B cell (primary cell): ENCODE measurements at regions of chr5 and their contacts with region 1.

Region 1: GRCh38 chr5:154467655-154468354 is 10.2 kb downstream of the HAND1 start:
- DNase-seq: peak; percentile 79
- ATAC-seq: peak; percentile 86
- H3K4me3 ChIP-seq: no peak overlapping the region
- H3K4me3 Mint-ChIP-seq: no peak overlapping the region
- H3K27ac ChIP-seq: no peak overlapping the region
- H3K27ac Mint-ChIP-seq: no peak overlapping the region
- H3K4me1 ChIP-seq: peaks cover 0 to 10% of the 10 kb centered on the region in 2 donors
- H3K4me1 Mint-ChIP-seq: no peaks in the 10 kb centered on the region
- H3K27me3 ChIP-seq: peaks cover 0 to 44% (median 32%) of the 10 kb centered on the region in 4 experiments
- H3K27me3 Mint-ChIP-seq: peaks cover 39% of the 10 kb centered on the region
- CTCF ChIP-seq: peak; percentile 95

Region 2: DNA sequence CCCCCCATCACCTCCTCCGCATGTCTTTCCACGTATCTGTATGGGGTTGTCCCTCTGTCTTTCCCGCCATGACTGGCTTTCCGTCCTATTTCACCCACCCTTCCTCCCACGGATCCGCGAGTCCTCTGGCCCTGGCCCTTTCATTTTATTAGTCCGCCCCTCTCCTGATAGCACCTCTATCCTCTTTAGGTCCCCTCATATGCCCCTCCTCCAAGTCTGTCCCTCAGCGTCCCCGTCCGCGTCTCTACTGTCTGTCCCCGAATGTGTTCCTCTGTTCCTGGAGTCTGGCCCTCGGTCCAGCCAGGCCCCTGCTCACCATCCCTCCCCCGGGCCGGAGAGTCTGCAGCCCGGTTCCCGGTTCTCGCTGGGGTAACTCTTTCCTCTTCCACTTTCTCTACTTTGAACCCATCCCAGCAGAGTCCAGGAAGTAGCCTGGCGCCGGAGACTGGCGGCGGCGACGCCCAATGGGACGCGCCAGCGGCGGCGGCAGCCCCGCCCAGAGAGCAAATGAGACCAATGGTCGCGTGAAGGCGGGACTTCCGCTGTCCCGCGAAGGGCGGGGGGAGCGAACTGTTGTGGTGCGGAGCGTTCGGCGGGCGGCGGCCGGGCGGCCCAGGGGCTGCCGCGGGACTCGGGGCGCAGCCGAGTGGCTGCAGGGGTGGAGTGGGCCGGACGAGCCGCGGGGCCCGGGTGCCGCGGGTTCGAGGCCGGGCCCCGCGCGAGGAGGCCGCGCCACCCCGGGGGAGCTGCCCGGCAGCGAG is 22.2 kb before region 1 on chr5 and contains the start of gene SAP30L:
- CTCF ChIA-PET with region 1: interaction called, 12 read pairs
- POLR2A ChIA-PET with region 1: no interaction called
- intact Hi-C with region 1: no loop called
- DNase-seq: peak; percentile 97
- ATAC-seq: peak; percentile 96
- H3K4me3 ChIP-seq: peak within 1 kb of the TSS; percentile 78 to 99 (median 90)
- H3K4me3 Mint-ChIP-seq: peak within 1 kb of the TSS; percentile 98
- H3K27ac ChIP-seq: peak within 1 kb of the TSS; percentile 9 to 75
- H3K27ac Mint-ChIP-seq: peak within 1 kb of the TSS; percentile 93
- H3K4me1 ChIP-seq: peaks cover 24 to 32% of the 10 kb centered on the region in 2 donors
- H3K4me1 Mint-ChIP-seq: peaks cover 53% of the 10 kb centered on the region
- H3K27me3 ChIP-seq: no peaks in the 10 kb centered on the region
- H3K27me3 Mint-ChIP-seq: no peaks in the 10 kb centered on the region
- CTCF ChIP-seq: no peak
- total RNA-seq, gene SAP30L: 41.5 and 50.0 TPM in 2 replicates

Region 3: DNA sequence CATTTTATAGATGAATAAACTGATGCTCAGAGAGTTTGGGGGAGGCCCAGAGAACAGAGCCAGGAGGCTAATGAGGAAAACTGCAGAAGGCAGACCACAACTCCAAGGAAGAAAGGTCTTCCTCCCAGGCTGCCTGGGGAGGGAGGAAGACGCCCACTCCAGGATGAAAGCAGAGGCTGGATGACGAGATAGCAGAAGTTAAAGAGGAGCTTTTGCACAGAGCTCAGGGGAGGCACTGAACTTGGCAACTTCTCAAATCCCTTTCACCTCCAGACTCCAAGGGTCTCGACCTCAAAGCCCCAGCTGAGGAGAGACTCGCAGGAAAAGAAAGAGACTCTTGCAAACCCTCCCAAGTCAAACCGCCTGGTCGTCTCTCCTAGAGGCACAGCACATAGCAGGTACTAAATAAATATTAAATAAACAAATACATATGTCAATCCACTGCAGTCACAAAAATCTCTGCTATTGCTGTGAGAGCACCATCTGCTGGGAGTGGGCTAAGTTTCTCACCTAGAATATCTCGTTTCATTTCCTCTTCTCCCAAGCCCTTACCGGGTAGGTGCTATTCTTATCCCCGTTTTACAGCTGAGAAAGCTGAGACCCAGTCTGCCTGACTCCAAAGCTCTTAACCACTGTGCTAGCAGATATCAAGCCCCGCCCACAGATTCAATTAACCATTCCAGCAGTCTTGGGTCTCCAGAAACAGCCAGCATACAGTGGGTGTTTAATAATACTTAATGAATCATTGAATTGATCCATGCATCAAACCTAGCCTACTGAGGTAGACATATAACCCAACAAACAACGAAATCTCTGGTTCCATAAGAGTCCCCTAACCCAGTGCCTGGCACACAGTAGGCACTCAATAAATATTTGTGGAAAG is 108.0 kb after region 1 on chr5:
- CTCF ChIA-PET with region 1: interaction called, 3 read pairs
- POLR2A ChIA-PET with region 1: no interaction called
- intact Hi-C with region 1: loop called (anchors 1 kb)
- DNase-seq: peak; percentile 45
- ATAC-seq: peak; percentile 51
- H3K4me3 ChIP-seq: no peak overlapping the region
- H3K4me3 Mint-ChIP-seq: no peak overlapping the region
- H3K27ac ChIP-seq: no peak overlapping the region
- H3K27ac Mint-ChIP-seq: no peak overlapping the region
- H3K4me1 ChIP-seq: peaks cover 9 to 11% of the 10 kb centered on the region in 2 donors
- H3K4me1 Mint-ChIP-seq: peaks cover 8% of the 10 kb centered on the region
- H3K27me3 ChIP-seq: peaks cover 0 to 13% (median 0%) of the 10 kb centered on the region in 4 experiments
- H3K27me3 Mint-ChIP-seq: peaks cover 13% of the 10 kb centered on the region
- CTCF ChIP-seq: no peak

Region 4: DNA sequence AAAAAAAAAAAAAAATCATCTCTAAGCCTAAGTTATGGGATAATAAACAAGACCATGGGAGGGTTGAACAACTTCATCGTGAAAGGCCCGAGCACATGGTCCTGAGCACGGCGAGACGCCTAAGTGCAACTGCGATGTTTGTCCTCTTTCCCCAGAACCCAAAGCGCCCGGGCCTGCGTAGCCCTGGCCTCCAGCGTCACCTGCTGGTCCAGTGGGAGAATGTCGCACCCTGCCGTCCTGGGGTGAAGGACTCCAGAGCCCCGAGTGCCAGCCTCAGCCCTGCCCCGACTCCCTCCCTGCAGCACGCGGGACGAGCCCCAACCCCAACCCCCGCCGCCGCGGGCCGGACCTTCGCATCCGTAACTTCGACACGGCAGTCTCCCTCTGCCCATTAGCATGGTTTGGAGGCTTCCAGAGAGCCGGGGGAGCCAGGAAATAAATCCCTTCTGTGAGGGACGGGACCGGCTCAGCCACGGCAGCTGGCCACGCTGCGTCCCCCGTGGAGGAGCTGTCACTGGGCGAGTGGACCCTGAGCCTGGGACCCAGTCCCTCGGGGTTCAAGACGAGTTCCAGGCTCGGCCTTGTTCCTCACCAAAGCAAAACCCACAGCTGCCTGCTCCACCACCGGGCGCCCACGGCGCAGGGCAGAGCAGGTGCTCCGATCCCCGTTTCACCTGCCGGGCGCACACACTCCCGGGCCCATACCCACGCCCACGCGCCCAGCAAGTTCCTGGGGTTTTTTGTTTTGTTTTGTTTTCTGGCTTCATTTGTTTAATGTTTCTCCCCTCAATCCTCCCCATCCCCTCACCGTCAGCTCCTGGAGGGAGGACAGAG is 142.7 kb after region 1 on chr5:
- CTCF ChIA-PET with region 1: interaction called, 14 read pairs
- POLR2A ChIA-PET with region 1: no interaction called
- intact Hi-C with region 1: no loop called
- DNase-seq: peak; percentile 70
- ATAC-seq: peak; percentile 68
- H3K4me3 ChIP-seq: peak overlapping the region in 2 of 5 experiments; percentile 36 to 45
- H3K4me3 Mint-ChIP-seq: peak overlapping the region; percentile 72
- H3K27ac ChIP-seq: no peak overlapping the region
- H3K27ac Mint-ChIP-seq: no peak overlapping the region
- H3K4me1 ChIP-seq: peaks cover 12 to 14% of the 10 kb centered on the region in 2 donors
- H3K4me1 Mint-ChIP-seq: peaks cover 13% of the 10 kb centered on the region
- H3K27me3 ChIP-seq: peaks cover 0 to 56% (median 19%) of the 10 kb centered on the region in 4 experiments
- H3K27me3 Mint-ChIP-seq: peaks cover 42% of the 10 kb centered on the region
- CTCF ChIP-seq: peak; percentile 69

Region 5: GRCh38 chr5:155147222-155147621 is 679.4 kb after region 1 on chr5:
- CTCF ChIA-PET with region 1: no interaction called
- POLR2A ChIA-PET with region 1: no interaction called
- intact Hi-C with region 1: loop called (anchors 5 kb)
- DNase-seq: no peak
- ATAC-seq: no peak
- H3K4me3 ChIP-seq: no peak overlapping the region
- H3K4me3 Mint-ChIP-seq: no peak overlapping the region
- H3K27ac ChIP-seq: no peak overlapping the region
- H3K27ac Mint-ChIP-seq: no peak overlapping the region
- H3K4me1 ChIP-seq: no peaks in the 10 kb centered on the region
- H3K4me1 Mint-ChIP-seq: no peaks in the 10 kb centered on the region
- H3K27me3 ChIP-seq: no peaks in the 10 kb centered on the region
- H3K27me3 Mint-ChIP-seq: peaks cover 3% of the 10 kb centered on the region
- CTCF ChIP-seq: no peak